H1 (cell line): ENCODE measurements at regions of chr1 and their contacts with region 1.

Region 1: DNA sequence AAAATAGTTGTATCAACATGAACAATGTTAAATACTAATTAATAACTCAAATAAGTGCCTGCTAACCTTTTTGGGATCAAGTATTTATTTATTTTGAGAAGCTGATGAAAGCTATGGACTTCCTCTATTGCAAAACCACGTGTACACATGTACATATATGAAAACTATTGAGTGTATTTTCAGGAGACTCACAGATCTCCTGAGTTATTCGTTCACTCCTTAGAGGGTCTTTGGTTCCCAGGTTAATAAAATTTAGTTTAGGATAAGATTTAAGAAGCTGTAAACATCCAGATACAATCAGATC is 130.5 kb downstream of the DISC1 start:
- DNase-seq: no peak
- H3K4me3 ChIP-seq: no peak overlapping the region
- H3K27ac ChIP-seq: no peak overlapping the region
- H3K4me1 ChIP-seq: no peaks in the 10 kb centered on the region
- H3K27me3 ChIP-seq: no peaks in the 10 kb centered on the region; a peak in 1 of 7 replicates
- CTCF ChIP-seq: no peak
- EP300 ChIP-seq: no peak
- POLR2A ChIP-seq: no peak
- RAD21 ChIP-seq: no peak

Region 2: GRCh38 chr1:231512147-231512698 is 244.8 kb before region 1 on chr1:
- CTCF ChIA-PET with region 1: no interaction called
- POLR2A ChIA-PET with region 1: no interaction called
- DNase-seq: no peak
- H3K4me3 ChIP-seq: no peak overlapping the region
- H3K27ac ChIP-seq: no peak overlapping the region
- H3K4me1 ChIP-seq: no peaks in the 10 kb centered on the region
- H3K27me3 ChIP-seq: peaks cover 0 to 1% (median 0%) of the 10 kb centered on the region in 4 experiments; a peak in 1 of 7 replicates
- CTCF ChIP-seq: no peak
- EP300 ChIP-seq: no peak
- POLR2A ChIP-seq: no peak
- RAD21 ChIP-seq: no peak

Region 3: DNA sequence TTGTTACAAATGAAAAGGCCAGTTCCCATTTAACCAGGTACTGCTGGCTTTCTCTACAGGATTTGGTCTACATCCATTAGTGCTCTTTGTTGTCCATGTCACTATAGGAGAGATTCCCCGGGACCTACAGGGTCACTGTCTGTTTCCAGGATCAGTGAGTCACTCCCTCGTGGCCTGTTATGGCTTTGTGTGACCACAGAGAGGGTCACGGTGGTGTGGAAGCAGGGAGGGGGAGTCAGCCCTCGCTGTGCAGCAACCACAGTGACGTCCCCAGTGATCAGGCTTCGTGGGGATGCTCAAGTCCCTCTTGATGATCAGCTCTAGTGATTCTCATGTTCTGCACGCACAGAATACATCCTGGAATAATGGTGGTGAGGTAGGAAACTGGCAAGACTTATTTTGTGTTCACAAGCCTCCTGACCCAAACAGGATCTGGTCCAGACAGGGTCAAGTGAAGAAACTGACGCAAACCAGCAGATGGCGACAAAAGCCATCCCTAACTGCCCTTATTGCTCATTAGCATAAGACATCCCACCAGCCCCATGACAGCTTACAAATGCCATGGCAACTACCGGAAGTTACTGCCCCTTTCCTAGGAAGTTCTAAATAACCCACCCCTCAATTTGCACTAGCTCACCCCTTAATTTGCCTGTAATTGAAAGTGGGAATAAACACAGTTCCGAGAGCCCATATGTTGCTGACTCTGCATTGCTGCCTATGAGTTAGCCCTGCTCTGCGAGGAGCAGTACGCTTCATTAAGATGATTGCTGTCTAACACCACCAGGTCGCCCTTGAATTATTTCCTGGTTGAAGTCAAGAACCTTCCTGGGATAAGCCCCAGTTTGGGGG is 32.0 kb before region 1 on chr1:
- CTCF ChIA-PET with region 1: interaction called, 13 read pairs
- POLR2A ChIA-PET with region 1: no interaction called
- DNase-seq: peak; percentile 51 to 71
- H3K4me3 ChIP-seq: no peak overlapping the region
- H3K27ac ChIP-seq: no peak overlapping the region
- H3K4me1 ChIP-seq: peaks cover 0 to 4% (median 0%) of the 10 kb centered on the region in 4 experiments; a peak in 1 of 7 replicates
- H3K27me3 ChIP-seq: no peaks in the 10 kb centered on the region
- CTCF ChIP-seq: peak; percentile 71 to 86 (median 72)
- EP300 ChIP-seq: no peak
- POLR2A ChIP-seq: no peak
- RAD21 ChIP-seq: peak; percentile 82 to 85

Region 4: DNA sequence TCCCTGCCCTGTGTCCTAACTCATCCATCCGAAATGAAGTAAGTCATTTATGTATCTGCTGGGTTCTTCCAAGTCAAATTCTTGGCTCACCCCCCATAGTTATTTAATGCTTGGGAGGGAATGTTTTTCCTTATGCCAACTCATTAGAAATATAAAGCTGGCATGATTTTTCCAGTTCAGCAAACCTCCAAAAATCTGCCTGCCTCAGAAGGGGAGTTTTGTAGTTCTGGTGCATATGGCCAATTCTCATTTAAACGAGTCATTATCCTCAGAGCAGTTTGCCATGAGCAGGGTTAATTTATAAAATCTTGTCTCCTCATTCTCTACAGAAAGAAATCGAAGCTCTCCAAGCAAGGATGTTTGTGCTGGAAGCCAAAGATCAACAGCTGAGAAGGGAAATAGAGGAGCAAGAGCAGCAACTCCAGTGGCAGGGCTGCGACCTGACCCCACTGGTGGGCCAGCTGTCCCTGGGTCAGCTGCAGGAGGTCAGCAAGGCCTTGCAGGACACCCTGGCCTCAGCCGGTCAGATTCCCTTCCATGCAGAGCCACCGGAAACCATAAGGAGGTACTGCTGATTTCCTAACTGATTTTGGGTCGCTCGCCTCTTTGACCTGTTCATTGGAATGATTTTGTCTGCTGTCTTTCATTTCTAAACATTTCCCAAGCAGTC is 13.6 kb after region 1 on chr1:
- CTCF ChIA-PET with region 1: interaction called, 48 read pairs
- POLR2A ChIA-PET with region 1: interaction called, 4 read pairs
- DNase-seq: no peak
- H3K4me3 ChIP-seq: no peak overlapping the region
- H3K27ac ChIP-seq: no peak overlapping the region
- H3K4me1 ChIP-seq: peaks cover 0 to 6% (median 2%) of the 10 kb centered on the region in 4 experiments; a peak in 3 of 7 replicates
- H3K27me3 ChIP-seq: no peaks in the 10 kb centered on the region
- CTCF ChIP-seq: no peak
- EP300 ChIP-seq: no peak
- POLR2A ChIP-seq: no peak
- RAD21 ChIP-seq: peak in 1 of 2 experiments; percentile 9; a peak in 1 of 4 replicates

Region 5: DNA sequence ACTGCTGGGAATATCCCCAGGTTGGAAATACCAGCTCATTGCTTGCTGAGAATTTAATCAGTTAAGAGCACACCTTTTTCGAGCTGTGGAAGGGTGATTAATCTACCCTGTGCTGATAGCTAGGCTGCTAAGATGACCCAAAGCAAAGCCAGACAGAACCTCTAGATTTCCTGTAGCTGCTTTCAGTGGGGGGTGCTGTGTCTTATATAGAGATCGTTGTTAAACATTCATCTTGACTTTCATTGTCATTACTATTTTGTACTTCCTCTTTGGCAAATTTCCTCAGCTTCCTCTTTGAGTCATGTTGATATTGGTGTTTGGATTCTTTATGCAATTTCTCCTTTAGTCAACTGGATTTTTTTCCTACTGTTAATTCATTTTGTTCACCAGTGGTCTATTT is 24.8 kb after region 1 on chr1:
- CTCF ChIA-PET with region 1: interaction called, 16 read pairs
- POLR2A ChIA-PET with region 1: no interaction called
- DNase-seq: no peak
- H3K4me3 ChIP-seq: no peak overlapping the region
- H3K27ac ChIP-seq: no peak overlapping the region
- H3K4me1 ChIP-seq: peaks cover 0 to 3% (median 0%) of the 10 kb centered on the region in 4 experiments; a peak in 1 of 7 replicates
- H3K27me3 ChIP-seq: no peaks in the 10 kb centered on the region
- CTCF ChIP-seq: no peak
- EP300 ChIP-seq: no peak
- POLR2A ChIP-seq: no peak
- RAD21 ChIP-seq: no peak

Region 6: GRCh38 chr1:231844986-231845502 is 88.0 kb after region 1 on chr1:
- CTCF ChIA-PET with region 1: interaction called, 13 read pairs
- POLR2A ChIA-PET with region 1: no interaction called
- DNase-seq: no peak
- H3K4me3 ChIP-seq: no peak overlapping the region
- H3K27ac ChIP-seq: no peak overlapping the region
- H3K4me1 ChIP-seq: no peaks in the 10 kb centered on the region
- H3K27me3 ChIP-seq: peaks cover 0 to 2% (median 0%) of the 10 kb centered on the region in 4 experiments; a peak in 1 of 7 replicates
- CTCF ChIP-seq: no peak
- EP300 ChIP-seq: no peak
- POLR2A ChIP-seq: no peak
- RAD21 ChIP-seq: no peak